Cardiac septum (tissue), 1 donor: ENCODE measurements at regions of chr10 and their contacts with region 1.

Region 1: DNA sequence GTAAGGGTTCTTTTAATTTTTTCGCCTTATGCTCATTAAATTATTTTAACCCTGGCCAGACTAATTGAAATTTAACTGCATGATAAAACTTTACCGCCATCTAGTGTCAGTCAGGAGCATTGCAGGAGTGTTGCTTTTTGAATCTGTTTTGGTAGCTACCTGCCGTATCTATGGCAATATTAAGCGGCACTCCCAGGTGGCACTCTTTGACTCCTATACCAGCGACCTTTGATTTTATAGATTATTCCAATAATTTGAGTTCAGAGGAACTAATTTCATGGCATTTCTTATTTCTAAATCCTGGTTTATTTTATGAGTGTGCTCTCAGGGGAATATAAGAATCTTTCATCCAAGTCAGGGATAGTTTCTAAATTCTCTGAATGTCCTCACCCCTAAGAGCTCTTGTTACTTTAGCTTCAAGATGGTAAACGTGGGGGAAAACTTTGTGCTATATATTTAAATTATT is 198.9 kb downstream of the REEP3 start:
- DNase-seq: no peak

Region 2: DNA sequence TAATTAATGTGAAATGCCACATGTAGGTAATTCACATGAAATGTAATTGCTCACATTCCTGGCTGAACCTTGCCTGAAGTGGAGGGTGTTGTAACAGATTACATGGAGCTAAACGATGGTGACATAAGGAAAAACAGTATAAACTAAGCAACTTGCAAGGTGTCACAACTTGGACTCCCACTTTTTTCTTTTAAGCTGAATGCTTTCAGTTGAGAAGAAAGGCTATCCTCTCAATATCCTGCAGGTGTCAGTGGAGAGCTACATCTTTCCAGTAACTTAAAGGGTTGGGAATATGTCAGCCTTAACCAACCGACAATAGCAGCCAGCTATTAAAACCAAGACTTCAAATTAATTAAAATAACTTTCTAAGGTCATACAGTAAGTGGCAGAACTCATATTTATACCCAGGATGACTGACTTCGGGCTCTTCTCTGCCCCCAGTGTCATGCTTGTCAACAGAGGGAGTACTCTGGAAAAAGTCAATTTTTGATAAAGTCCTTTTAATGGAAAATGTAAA is 553.3 kb before region 1 on chr10:
- intact Hi-C with region 1: loop called (anchors 2 kb)
- DNase-seq: no peak

Region 3: DNA sequence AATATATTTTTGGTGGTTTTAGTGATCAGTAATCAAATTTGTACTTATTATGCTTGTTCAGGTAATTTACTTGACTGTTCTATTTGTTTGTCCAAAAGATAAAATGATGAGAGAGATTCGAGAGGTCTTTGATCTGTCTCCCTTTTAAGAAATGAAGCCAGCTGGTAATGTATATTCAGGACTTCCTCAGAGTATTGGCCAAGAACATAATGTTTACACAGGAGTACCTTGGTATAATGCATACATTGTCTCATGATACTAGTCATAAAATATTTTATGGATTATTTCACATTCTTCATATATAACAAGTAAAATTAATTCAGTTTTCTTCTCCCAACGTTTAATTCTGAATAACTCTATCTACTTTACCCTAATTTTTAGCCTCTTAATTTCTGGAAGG is 98.0 kb before region 1 on chr10:
- intact Hi-C with region 1: no loop called
- DNase-seq: no peak

Region 4: GRCh38 chr10:63767138-63767801 is 47.2 kb after region 1 on chr10:
- intact Hi-C with region 1: loop called (anchors 5 kb)
- DNase-seq: no peak

Region 5: DNA sequence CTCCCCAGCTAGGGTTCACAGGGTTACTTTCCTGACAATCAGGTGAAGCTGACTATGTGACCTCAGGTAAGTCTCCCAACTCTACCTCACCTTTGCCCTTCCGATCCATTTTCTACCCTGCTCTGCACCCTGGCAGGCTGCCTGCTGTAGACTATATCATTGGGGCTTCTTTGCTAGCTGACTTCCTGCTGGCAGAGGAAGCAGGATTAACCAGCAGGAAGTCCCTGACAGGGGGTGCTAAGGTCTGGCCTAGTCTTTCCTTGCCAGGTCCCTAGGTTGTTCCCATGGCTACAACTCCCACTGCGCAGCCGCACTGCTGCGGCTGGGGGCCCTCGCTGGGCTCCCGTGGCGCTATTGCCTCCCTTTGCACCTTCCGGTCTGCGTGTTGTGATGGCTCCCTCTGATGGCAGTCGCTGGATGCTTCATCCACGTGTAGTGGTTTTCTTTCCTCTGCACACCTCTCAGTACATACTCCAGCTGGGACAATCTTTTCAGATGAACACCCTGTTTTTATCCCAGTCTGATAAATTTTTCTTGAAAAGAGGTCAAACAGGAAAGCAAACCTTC is 167.0 kb after region 1 on chr10:
- intact Hi-C with region 1: no loop called
- DNase-seq: no peak